Psoas muscle (tissue), 8 donors: ENCODE measurements at regions of chr1 and their contacts with region 1.

Region 1: DNA sequence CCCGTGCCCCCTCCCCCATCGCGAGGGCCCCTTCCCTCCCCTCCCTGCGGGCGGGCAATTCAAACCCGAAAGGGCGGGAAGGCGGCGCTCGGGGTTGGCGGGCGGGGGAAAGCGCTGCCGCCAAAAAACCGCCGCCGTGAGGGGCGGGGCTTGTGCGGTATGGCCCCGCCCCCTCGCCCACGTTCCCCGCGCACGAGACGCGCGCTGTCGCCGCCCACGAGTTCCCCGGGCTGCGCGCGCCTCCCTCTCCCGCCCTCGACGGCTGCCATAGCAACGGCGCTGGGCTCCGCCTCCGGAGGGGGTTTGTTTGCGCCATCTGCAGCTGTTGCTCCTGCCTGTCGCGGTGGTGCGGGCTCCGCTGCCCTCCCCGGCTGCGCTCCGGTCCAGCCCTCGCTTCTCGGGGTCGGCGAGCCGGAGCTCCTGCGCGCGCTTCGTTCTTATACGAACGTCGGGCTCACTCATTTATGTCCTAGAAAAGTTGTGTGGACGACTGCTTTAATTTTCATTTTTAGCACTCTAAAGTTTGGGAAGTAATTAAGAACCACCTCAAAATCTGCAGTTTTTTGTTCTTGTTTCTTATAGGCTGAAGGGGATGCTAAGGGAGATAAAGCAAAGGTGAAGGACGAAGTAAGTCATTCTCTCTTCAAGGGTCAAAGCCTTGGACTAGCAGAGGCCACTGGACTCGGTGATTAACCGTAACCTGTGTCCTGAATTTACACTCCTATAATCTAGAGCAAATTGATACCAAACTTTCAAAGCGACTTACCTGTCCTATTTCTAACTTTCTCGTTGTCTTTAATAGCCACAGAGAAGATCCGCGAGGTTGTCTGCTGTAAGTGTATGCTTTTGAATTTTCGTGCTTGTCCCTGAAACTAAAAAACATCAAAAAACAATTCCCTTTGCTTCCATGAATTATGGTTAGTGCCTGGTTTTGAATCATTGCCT is 933 bp downstream of the HMGN2 start:
- DNase-seq: peak; percentile 97 to 99
- ATAC-seq: peak; percentile 88 to 94 (median 92)
- H3K4me3 ChIP-seq: peak overlapping the region; percentile 97
- H3K27ac ChIP-seq: peak overlapping the region; percentile 99
- H3K4me1 ChIP-seq: peaks cover 26% of the 10 kb centered on the region
- H3K27me3 ChIP-seq: no peaks in the 10 kb centered on the region
- CTCF ChIP-seq: no peak

Region 2: DNA sequence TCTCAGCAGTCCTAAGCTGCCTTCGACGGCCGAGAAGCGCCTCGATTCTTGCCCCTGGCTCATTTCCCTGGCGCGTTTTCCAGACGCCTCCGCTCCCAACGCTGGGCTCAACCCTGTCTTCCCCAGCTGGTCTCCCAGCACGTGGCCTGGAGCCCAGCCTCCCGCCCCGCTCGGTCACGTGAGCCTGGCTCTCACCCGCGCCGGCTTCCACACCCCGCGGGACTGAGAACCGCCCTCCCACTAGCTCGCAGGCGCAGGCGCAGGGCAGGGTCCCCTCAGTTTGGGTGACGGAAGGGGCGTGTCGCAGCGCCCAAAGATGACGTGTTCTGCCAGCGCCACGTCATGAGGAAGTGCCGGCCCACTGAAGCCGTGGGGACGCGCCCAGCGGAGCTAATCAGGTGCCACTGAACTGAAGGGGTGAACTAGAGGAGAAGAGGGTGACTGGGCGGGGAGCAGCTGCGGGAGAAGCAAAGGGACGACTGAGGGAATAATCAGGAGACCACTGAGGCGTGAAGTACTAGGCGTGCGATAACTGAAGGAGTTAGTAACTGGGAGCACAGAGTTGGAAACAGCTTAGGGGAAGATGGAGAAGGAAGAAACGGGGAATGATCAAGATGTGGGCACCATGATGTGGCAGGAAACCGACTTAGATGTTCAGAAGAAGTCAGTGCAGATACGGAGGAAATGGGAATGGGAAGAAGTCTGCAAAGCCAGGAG is 41.0 kb before region 1 on chr1 and contains the start of gene DHDDS:
- intact Hi-C with region 1: loop called (anchors 2 to 5 kb)
- DNase-seq: peak; percentile 99
- ATAC-seq: peak; percentile 99 to 100 (median 100)
- H3K4me3 ChIP-seq: peak within 1 kb of the TSS; percentile 94
- H3K27ac ChIP-seq: peak within 1 kb of the TSS; percentile 90
- H3K4me1 ChIP-seq: peaks cover 11% of the 10 kb centered on the region
- H3K27me3 ChIP-seq: no peaks in the 10 kb centered on the region
- CTCF ChIP-seq: no peak
- total RNA-seq, gene DHDDS: 14.1 to 25.8 (median 21.4) TPM